ENCODE measurements at regions of chrX and their contacts with region 1.

Region 1: DNA sequence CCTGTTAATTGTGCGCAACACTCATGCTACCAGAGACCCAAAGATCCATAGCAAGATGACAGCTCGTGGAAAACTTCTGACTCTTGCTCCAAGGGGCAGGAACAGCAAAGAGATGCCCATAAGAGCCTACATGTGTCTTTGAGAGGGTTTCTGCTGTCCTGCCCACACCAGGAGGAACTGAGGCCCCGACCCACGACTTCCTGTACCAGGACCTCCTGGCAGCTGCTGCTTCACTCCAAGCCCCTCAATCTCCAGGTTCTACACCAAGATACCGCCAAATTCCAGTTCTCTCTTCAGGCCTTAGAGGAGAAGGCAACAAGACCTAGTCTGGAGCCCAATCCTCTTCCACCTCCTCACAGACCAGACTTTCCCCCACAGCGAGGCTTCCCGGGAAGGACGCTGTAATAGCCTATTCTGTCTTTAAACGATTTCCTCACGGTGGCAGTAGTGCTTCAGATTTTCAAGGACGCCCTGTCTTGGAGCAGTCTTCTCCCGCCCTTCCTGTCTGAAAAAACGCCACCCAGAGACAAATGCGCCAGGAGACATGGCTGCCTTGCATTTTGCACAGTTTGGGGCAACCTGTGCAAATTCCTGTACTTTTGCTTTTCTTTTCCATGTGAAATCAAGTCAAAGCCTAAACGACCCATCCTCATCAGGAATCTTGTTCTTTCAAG is 230.2 kb upstream of the STK26 start:
- DNase-seq: peak; percentile 92
- ATAC-seq: peak; percentile 94
- H3K4me3 ChIP-seq: peak overlapping the region; percentile 57 to 78
- H3K27ac ChIP-seq: peak overlapping the region; percentile 98
- H3K4me1 ChIP-seq: peaks cover 6% of the 10 kb centered on the region
- H3K27me3 ChIP-seq: no peaks in the 10 kb centered on the region
- CTCF ChIP-seq: peak; percentile 60

Region 2: GRCh38 chrX:131617182-131617581 is 175.7 kb before region 1 on chrX:
- CTCF ChIA-PET with region 1: no interaction called
- POLR2A ChIA-PET with region 1: no interaction called
- in situ Hi-C with region 1: no loop called
- intact Hi-C with region 1: no loop called
- DNase-seq: no peak
- ATAC-seq: no peak
- H3K4me3 ChIP-seq: no peak overlapping the region
- H3K27ac ChIP-seq: no peak overlapping the region
- H3K4me1 ChIP-seq: no peaks in the 10 kb centered on the region
- H3K27me3 ChIP-seq: peaks cover 4% of the 10 kb centered on the region
- CTCF ChIP-seq: no peak

Region 3: DNA sequence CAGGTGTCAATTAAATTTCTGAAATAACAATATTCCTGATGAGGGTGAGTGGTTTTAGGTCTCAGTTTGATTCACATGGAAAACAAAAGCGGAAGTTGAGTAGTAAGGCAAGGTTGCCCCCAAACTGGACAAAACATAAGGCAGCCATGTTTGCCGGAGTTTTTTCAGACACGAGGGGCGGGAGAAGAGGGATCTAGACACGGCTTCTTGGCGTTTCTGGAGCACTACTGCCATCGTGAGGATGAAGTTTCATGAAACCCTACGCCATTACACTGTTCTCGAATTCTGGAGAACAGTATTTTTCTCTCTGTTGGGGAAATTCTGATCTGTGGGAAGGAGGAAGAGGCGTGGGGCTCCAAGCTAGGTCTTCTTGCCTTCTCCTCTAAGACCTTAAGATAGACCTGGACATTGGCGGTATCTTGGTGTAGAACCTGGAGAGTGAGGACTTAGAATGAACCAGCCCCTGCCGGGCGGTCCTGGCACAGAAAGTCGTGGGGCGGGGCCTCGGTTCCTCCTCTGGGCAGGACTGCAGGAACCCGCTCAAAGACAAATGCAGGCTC is 88.7 kb before region 1 on chrX:
- CTCF ChIA-PET with region 1: no interaction called
- POLR2A ChIA-PET with region 1: no interaction called
- in situ Hi-C with region 1: no loop called
- intact Hi-C with region 1: loop called (anchors 2 kb)
- DNase-seq: peak; percentile 88
- ATAC-seq: peak; percentile 95
- H3K4me3 ChIP-seq: peak overlapping the region; percentile 77 to 83
- H3K27ac ChIP-seq: peak overlapping the region; percentile 76
- H3K4me1 ChIP-seq: peaks cover 16% of the 10 kb centered on the region
- H3K27me3 ChIP-seq: no peaks in the 10 kb centered on the region
- CTCF ChIP-seq: peak; percentile 64

Region 4: GRCh38 chrX:131830400-131831184 is 37.7 kb after region 1 on chrX:
- CTCF ChIA-PET with region 1: no interaction called
- POLR2A ChIA-PET with region 1: no interaction called
- in situ Hi-C with region 1: no loop called
- intact Hi-C with region 1: no loop called
- DNase-seq: no peak
- ATAC-seq: no peak
- H3K4me3 ChIP-seq: no peak overlapping the region
- H3K27ac ChIP-seq: no peak overlapping the region
- H3K4me1 ChIP-seq: no peaks in the 10 kb centered on the region
- H3K27me3 ChIP-seq: no peaks in the 10 kb centered on the region; the same call in 1 of the 2 replicates
- CTCF ChIP-seq: peak; percentile 38

Measured in Panc1 (cell line).